ENCODE measurements at regions of chr16 and their contacts with region 1.

Region 1: GRCh38 chr16:68902008-68902968 is 59.0 kb downstream of the TANGO6 start:
- DNase-seq: peak; percentile 85

Region 2: DNA sequence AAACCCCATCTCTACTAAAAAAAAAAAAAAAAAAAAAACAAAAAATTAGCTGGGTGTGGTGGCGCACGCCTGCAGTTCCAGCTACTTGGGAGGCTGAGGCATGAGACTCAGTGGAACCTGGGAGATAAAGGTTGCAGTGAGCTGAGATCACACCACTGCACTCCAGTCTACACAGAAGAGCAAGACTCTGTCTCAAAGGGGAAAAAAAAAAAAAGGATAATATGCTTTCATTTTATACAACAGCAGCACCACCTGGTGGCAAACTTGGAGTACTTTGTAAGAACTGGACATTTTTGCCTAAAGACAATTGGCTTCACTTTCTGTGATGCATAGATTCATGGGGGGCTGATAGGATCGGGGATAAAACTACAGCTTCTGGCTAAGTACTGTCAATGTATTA is 221.6 kb after region 1 on chr16:
- in situ Hi-C with region 1: loop called (anchors 25 kb)
- DNase-seq: peak; percentile 85